ENCODE measurements at regions of chr9 and their contacts with region 1.

Region 1: GRCh38 chr9:6055213-6055612 is 39.8 kb upstream of the RANBP6 start:
- DNase-seq: peak; percentile 58
- ATAC-seq: peak; percentile 84
- H3K4me3 ChIP-seq: no peak overlapping the region
- H3K27ac ChIP-seq: no peak overlapping the region
- H3K4me1 ChIP-seq: peaks cover 19% of the 10 kb centered on the region
- H3K27me3 ChIP-seq: no peaks in the 10 kb centered on the region
- CTCF ChIP-seq: peak; percentile 51 to 79 (median 64); a peak in 5 of 6 replicates
- EP300 ChIP-seq: no peak
- POLR2A ChIP-seq: no peak
- RAD21 ChIP-seq: peak; percentile 96

Region 2: GRCh38 chr9:5832543-5833529 is 222.4 kb before region 1 on chr9 and contains the start of gene ERMP1:
- CTCF ChIA-PET with region 1: interaction called, 33 read pairs
- POLR2A ChIA-PET with region 1: no interaction called
- RAD21 ChIA-PET with region 1: interaction called, 8 read pairs
- SMC1A ChIA-PET with region 1: interaction called, 12 read pairs
- in situ Hi-C with region 1: no loop called
- intact Hi-C with region 1: no loop called
- DNase-seq: no peak
- ATAC-seq: peak; percentile 85
- H3K4me3 ChIP-seq: peak within 1 kb of the TSS; percentile 97
- H3K27ac ChIP-seq: peak within 1 kb of the TSS; percentile 70
- H3K4me1 ChIP-seq: peaks cover 5% of the 10 kb centered on the region; the same call in 1 of the 2 replicates
- H3K27me3 ChIP-seq: no peaks in the 10 kb centered on the region
- CTCF ChIP-seq: peak; percentile 85 to 97 (median 89); a peak in 5 of 6 replicates
- EP300 ChIP-seq: no peak
- POLR2A ChIP-seq: peak; percentile 91
- RAD21 ChIP-seq: peak; percentile 62
- polyA plus RNA-seq, gene ERMP1: 2.4 to 2.7 TPM

Region 3: DNA sequence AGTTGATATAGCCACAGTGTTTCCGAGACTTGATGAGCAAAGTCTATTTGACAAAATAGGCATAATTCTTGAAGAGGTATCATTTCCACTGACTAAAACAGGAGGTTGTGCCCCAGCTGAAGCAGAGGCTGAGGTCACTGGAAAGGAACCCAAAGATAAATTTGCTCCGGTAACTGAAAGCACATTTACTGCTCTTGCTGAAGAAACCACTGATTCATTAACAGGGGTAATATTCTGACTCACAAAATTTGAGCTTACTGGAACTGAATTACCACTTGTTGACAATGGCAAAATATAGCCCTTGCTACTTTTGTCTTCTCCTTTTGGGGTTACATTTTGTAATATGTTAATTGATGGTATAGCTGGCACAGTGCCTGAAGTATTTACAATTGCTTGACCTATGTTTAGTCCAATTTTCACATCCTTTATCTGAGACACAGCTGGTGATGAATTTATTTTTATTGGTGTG is 134.3 kb before region 1 on chr9:
- CTCF ChIA-PET with region 1: interaction called, 13 read pairs
- POLR2A ChIA-PET with region 1: interaction called, 3 read pairs
- RAD21 ChIA-PET with region 1: interaction called, 24 read pairs
- SMC1A ChIA-PET with region 1: interaction called, 47 read pairs
- in situ Hi-C with region 1: no loop called
- intact Hi-C with region 1: no loop called
- DNase-seq: peak; percentile 66
- ATAC-seq: peak; percentile 91
- H3K4me3 ChIP-seq: no peak overlapping the region
- H3K27ac ChIP-seq: no peak overlapping the region
- H3K4me1 ChIP-seq: no peaks in the 10 kb centered on the region; the same call in 1 of the 2 replicates
- H3K27me3 ChIP-seq: no peaks in the 10 kb centered on the region
- CTCF ChIP-seq: no peak
- EP300 ChIP-seq: peak; percentile 87 to 94; a peak in 3 of 4 replicates
- POLR2A ChIP-seq: no peak
- RAD21 ChIP-seq: no peak

Region 4: DNA sequence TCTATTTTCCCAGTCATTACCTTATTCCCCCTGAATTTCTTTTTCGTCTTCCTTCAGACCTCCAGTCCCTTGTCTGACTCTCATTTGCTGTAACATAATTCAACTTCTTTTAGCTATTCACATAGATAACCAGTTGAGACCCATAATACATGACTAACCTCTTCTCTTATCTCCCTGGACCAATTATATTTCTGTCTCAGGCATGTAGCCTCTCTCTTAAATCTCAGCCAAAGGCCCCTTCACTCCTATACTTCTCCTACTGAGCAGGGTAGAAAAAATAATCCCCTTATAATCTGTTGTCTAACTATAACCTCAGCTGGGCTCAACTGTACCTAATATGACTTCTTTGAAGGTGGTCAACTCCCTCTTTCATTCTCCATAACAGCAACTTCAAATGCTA is 60.7 kb before region 1 on chr9:
- CTCF ChIA-PET with region 1: interaction called, 12 read pairs
- POLR2A ChIA-PET with region 1: interaction called, 3 read pairs
- RAD21 ChIA-PET with region 1: interaction called, 10 read pairs
- SMC1A ChIA-PET with region 1: interaction called, 13 read pairs
- in situ Hi-C with region 1: no loop called
- intact Hi-C with region 1: no loop called
- DNase-seq: no peak
- ATAC-seq: no peak
- H3K4me3 ChIP-seq: no peak overlapping the region
- H3K27ac ChIP-seq: no peak overlapping the region
- H3K4me1 ChIP-seq: no peaks in the 10 kb centered on the region; the same call in 1 of the 2 replicates
- H3K27me3 ChIP-seq: no peaks in the 10 kb centered on the region
- CTCF ChIP-seq: no peak
- EP300 ChIP-seq: no peak
- POLR2A ChIP-seq: no peak
- RAD21 ChIP-seq: no peak

Region 5: GRCh38 chr9:6015278-6016157 is 39.7 kb before region 1 on chr9 and contains the start of gene RANBP6:
- CTCF ChIA-PET with region 1: interaction called, 30 read pairs
- POLR2A ChIA-PET with region 1: interaction called, 4 read pairs
- RAD21 ChIA-PET with region 1: interaction called, 7 read pairs
- SMC1A ChIA-PET with region 1: interaction called, 6 read pairs
- in situ Hi-C with region 1: no loop called
- intact Hi-C with region 1: no loop called
- DNase-seq: peak; percentile 51
- ATAC-seq: peak; percentile 99
- H3K4me3 ChIP-seq: peak within 1 kb of the TSS; percentile 83
- H3K27ac ChIP-seq: peak within 1 kb of the TSS; percentile 80
- H3K4me1 ChIP-seq: peaks cover 12% of the 10 kb centered on the region
- H3K27me3 ChIP-seq: no peaks in the 10 kb centered on the region
- CTCF ChIP-seq: no peak
- EP300 ChIP-seq: no peak
- POLR2A ChIP-seq: peak; percentile 86
- RAD21 ChIP-seq: no peak
- polyA plus RNA-seq, gene RANBP6: 10.9 to 11.7 TPM

Region 6: DNA sequence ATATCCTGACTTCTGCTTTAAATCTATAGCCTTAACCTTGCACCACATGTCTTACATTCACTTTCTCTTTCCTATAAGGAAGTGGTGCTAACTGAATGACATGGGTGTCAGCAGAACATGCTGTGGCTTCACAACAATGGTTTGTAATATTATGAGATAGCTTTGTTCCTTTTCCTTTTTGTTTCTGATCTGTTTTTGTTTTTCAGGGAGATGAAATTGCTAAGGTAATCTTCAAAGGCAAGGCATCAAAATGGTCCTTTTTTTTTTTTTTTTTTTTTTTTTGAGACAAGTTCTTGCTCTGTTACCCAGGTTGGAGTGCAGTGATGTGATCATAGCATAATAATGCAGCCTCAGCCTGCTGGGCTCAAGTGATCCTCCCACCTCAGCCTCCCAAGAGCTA is 13.8 kb after region 1 on chr9:
- CTCF ChIA-PET with region 1: interaction called, 28 read pairs
- POLR2A ChIA-PET with region 1: interaction called, 4 read pairs
- RAD21 ChIA-PET with region 1: interaction called, 7 read pairs
- SMC1A ChIA-PET with region 1: interaction called, 5 read pairs
- in situ Hi-C with region 1: no loop called
- intact Hi-C with region 1: no loop called
- DNase-seq: peak; percentile 45
- ATAC-seq: peak; percentile 100
- H3K4me3 ChIP-seq: no peak overlapping the region
- H3K27ac ChIP-seq: peak overlapping the region; percentile 66
- H3K4me1 ChIP-seq: 0 out of 2 replicates have a peak, but pooled peaks cover 4% of the 10 kb centered on the region
- H3K27me3 ChIP-seq: no peaks in the 10 kb centered on the region
- CTCF ChIP-seq: no peak
- EP300 ChIP-seq: peak in 1 of 2 experiments; percentile 43; a peak in 1 of 4 replicates
- POLR2A ChIP-seq: no peak
- RAD21 ChIP-seq: no peak

Region 7: GRCh38 chr9:6200761-6201160 is 145.5 kb after region 1 on chr9:
- CTCF ChIA-PET with region 1: no interaction called
- POLR2A ChIA-PET with region 1: no interaction called
- RAD21 ChIA-PET with region 1: no interaction called
- SMC1A ChIA-PET with region 1: no interaction called
- in situ Hi-C with region 1: no loop called
- intact Hi-C with region 1: no loop called
- DNase-seq: no peak
- ATAC-seq: no peak
- H3K4me3 ChIP-seq: no peak overlapping the region
- H3K27ac ChIP-seq: no peak overlapping the region
- H3K4me1 ChIP-seq: peaks cover 4% of the 10 kb centered on the region; the same call in 1 of the 2 replicates
- H3K27me3 ChIP-seq: no peaks in the 10 kb centered on the region; a peak in 1 of 4 replicates
- CTCF ChIP-seq: no peak
- EP300 ChIP-seq: no peak
- POLR2A ChIP-seq: no peak
- RAD21 ChIP-seq: no peak

Region 8: GRCh38 chr9:6305954-6306563 is 250.8 kb after region 1 on chr9:
- CTCF ChIA-PET with region 1: interaction called, 142 read pairs
- POLR2A ChIA-PET with region 1: no interaction called
- RAD21 ChIA-PET with region 1: interaction called, 91 read pairs
- SMC1A ChIA-PET with region 1: interaction called, 62 read pairs
- in situ Hi-C with region 1: no loop called
- intact Hi-C with region 1: loop called (anchors 1 kb)
- DNase-seq: peak; percentile 23
- ATAC-seq: peak; percentile 80
- H3K4me3 ChIP-seq: no peak overlapping the region
- H3K27ac ChIP-seq: no peak overlapping the region
- H3K4me1 ChIP-seq: peaks cover 3% of the 10 kb centered on the region; the same call in 1 of the 2 replicates
- H3K27me3 ChIP-seq: no peaks in the 10 kb centered on the region
- CTCF ChIP-seq: peak; percentile 43 to 69 (median 52); a peak in 5 of 6 replicates
- EP300 ChIP-seq: no peak
- POLR2A ChIP-seq: no peak
- RAD21 ChIP-seq: peak; percentile 92

Measured in GM12878 (cell line).